ENCODE measurements at regions of chr2 and their contacts with region 1.

Region 1: GRCh38 chr2:132547074-132547687 is 122.8 kb downstream of the LYPD1 start:
- DNase-seq: no peak

Region 2: DNA sequence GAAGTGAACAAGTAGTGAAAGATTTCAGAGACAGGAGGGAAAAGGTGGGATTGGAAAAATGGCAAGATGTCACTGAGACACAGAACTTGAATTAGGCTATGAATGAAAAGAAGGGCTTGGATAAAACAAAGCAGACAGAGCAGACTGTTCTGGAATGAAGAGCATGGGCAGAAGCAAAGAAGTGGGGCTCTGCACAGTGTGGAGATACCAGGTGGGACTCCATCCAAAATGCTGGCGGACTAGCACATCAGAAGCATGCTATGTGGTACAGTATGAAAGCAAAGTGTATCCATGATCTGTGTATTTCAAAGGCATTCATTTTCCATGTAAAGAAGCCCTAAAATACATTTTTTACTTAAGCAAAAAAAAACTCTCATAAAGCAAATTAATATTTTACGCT is 533.6 kb after region 1 on chr2:
- intact Hi-C with region 1: loop called (anchors 5 kb)
- DNase-seq: no peak

Region 3: DNA sequence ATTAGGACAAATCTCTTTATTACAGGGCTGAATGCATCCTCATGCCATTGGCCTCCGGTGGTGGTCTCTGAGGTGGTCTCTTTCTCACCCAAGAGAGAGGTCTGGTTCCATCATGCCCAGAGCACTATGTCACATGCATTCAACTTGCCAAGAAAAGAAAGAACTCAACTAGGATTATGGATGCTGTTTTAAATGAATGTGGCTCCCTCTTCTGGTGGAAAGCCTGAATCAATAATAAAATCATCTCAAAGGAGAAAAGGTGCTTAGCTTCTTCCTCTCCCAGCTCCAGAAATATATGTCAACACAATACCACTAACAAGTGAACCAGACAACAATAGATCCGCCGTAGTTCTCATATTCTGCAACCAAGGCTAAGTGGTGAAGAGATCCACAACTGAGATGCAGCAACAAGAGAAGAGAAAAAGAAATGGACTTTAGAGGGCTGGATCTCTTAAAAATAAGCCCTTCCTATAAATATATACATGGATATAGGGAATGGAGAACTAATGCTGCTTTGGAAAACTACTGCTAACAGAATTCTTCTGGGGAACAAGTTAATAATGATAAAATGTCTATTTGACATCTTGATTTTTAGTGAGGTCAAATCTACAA is 624.3 kb after region 1 on chr2:
- intact Hi-C with region 1: loop called (anchors 5 kb)
- DNase-seq: no peak

Region 4: DNA sequence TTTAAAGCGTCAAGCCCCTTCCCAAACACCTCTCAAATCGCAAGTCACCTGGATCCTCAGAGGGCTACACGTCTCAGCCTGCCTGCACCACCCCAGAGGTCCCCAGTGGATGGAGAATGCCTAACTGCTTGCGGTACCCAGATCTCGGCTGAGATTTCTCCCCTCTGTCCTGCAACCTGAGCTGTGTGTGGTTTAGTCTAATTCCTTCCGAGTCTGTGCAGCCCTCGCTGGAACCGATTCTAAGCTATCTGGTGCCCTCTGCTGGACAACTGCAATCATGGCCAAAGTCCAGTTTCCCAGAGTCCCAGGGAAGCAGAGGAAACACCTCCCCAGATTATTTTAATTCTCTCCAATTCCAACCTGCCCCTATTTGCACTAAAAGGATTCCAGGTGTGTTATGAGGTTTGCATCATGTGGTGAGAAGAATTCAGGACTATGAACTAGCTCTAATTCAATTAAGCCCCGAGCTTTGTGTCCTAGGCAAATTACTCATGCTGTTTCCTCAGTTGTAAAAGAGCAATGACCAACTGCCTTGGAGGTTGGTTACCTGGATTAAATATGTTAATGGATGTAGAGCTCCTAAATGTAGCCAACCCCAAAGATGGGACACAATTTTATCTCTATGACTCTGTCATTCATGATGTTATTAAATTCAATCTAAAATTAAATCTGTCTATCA is 1297.2 kb after region 1 on chr2:
- intact Hi-C with region 1: loop called (anchors 10 kb)
- DNase-seq: no peak